Colonic mucosa (tissue), 4 donors: ENCODE measurements at regions of chr4 and their contacts with region 1.

Region 1: DNA sequence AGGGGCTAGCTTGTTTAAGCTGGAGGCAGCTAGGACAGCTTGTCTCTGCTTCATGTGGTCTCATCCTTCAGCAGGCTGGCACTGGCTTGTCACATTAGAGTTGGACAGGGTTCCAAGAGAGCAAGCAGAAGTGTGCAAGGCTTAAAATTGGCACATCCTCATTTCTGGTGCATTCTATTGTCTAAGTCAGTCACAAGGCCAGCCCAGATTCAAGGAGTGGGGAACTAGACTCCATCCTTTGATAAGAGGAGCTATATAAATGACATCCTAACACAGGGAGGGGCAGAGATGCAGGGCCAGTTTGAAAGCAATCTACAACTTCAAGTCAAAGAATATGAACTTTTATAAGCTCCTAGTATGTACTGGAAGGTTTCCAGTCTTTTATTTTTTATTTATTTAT is 313.2 kb downstream of the PTTG2 start:
- DNase-seq: peak; percentile 45
- H3K4me3 ChIP-seq: no peak overlapping the region
- H3K27ac ChIP-seq: no peak overlapping the region
- H3K4me1 ChIP-seq: no peaks in the 10 kb centered on the region
- H3K27me3 ChIP-seq: no peaks in the 10 kb centered on the region
- CTCF ChIP-seq: no peak

Region 2: DNA sequence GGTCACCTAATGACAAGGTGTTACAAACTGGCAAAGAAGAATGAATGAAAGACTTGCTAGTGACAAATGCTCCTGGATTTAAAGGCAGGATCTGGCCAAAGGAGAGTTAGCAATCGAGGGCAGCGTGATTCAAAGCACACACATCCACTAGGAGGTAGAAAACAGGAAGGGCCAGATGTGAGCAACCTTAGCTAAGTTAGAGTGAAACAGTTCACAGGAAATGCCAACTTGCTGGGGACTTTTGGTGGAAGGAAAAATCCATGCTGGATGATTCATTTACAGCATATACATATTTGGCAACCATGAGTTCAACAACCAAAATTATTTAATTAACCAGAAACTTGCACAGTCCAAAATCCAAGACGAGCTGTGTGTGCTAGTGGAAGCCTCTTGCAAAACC is 36.3 kb before region 1 on chr4:
- intact Hi-C with region 1: loop called (anchors 5 kb)
- DNase-seq: no peak
- H3K4me3 ChIP-seq: no peak overlapping the region
- H3K27ac ChIP-seq: no peak overlapping the region
- H3K4me1 ChIP-seq: no peaks in the 10 kb centered on the region
- H3K27me3 ChIP-seq: no peaks in the 10 kb centered on the region
- CTCF ChIP-seq: no peak